Activated CD8-positive, alpha-beta memory T cell treated with anti-CD3 and anti-CD28 coated beads, Interleukin-2, amount 10 ng/mL, durations not matched to agents 7 days and 5 days (primary cell): ENCODE measurements at regions of chr17 and their contacts with region 1.

Region 1: GRCh38 chr17:57597531-57598453 is 147.3 kb downstream of the CCDC182 start:
- DNase-seq: peak; percentile 57
- ATAC-seq: no peak
- H3K4me3 Mint-ChIP-seq: no peak overlapping the region
- H3K27ac Mint-ChIP-seq: peak overlapping the region; percentile 98
- H3K4me1 Mint-ChIP-seq: peaks cover 57% of the 10 kb centered on the region
- H3K27me3 Mint-ChIP-seq: no peaks in the 10 kb centered on the region

Region 2: GRCh38 chr17:57561072-57561861 is 36.5 kb before region 1 on chr17:
- CTCF ChIA-PET with region 1: no interaction called
- DNase-seq: no peak
- ATAC-seq: no peak
- H3K4me3 Mint-ChIP-seq: no peak overlapping the region
- H3K27ac Mint-ChIP-seq: no peak overlapping the region
- H3K4me1 Mint-ChIP-seq: peaks cover 4% of the 10 kb centered on the region
- H3K27me3 Mint-ChIP-seq: no peaks in the 10 kb centered on the region

Region 3: DNA sequence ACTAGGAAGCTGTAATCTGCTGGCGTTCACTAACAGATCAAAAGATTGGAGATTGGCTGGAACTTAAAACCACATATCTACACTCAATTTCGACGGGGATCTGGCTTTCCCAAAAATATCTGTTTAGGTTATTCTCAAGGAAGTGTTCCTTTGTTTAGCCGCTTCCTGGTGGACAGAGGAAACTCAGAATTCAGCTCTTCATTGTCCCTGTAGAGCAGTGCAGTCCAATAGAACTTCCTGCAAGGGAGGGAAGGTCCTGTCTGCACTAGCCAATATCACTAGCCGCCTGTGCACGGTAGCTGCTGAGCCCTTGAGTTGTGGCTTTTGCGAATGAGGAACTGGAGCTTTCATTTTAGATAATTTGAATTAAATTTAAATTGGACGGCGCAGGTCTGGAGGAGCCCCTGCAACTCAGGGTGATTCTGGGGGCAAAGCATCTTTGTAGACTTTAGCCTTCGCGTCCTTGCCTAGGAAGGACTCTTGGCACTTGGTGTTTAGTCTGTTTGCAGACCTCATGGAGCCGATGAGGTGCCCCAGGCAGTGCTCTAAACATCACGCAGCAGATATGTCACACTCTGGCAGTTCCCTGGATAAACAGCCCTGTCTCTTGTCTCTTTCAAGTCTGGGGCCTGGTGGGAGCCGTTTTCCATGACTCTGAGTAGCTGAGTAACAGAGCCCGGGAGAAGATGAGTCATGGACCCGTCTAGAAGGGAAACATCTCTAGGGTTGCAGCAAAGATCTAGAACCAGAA is 25.1 kb after region 1 on chr17:
- CTCF ChIA-PET with region 1: interaction called, 12 read pairs
- DNase-seq: no peak
- ATAC-seq: no peak
- H3K4me3 Mint-ChIP-seq: no peak overlapping the region
- H3K27ac Mint-ChIP-seq: no peak overlapping the region
- H3K4me1 Mint-ChIP-seq: peaks cover 19% of the 10 kb centered on the region
- H3K27me3 Mint-ChIP-seq: no peaks in the 10 kb centered on the region

Region 4: DNA sequence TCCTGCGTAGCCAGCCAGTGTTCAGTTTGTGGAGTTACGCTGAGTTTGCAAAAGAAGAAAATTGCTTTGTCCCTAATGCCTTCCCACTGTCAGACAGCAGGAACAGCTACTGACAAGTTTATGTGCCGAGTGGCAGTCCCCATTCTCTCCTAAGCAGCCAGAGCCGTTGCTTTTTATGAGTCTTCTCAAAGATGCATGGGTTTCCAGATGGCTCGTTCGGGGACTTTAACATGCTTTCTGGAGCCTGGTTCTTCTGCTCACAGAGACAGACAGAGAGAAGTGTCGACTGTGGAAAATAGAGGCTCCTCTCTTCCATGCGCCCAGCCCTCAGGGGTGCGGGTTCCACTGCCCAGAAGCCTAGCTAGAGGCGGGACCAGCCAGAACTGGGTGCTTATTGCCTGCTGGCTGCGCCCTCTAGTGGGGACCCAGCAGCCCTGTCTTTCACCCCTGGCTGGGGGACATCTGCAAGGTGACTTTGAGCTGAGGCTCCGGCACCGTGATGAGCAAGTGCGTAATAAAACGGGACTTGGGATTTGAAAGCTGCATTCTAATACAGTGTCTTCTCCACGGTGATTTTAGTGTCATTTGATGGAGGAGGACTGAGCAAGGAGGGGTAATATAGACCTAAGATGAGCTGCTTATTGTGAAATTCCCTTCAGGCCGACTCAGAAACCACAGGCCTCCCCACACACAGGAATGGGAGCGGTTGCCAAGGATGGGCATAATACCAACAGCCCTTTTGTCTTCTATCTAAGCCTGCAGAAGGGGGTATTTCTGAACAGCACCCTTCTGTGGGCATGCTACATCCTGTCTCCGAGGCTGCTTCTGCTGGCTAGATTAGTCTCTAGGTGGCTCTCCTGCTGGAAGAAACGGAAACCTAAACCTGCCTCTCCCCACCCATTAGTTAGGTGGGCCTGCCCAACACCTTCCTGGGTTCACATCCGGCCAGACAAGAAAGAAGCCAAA is 74.2 kb after region 1 on chr17:
- CTCF ChIA-PET with region 1: interaction called, 108 read pairs
- DNase-seq: peak; percentile 86
- ATAC-seq: peak; percentile 93
- H3K4me3 Mint-ChIP-seq: peak overlapping the region; percentile 50
- H3K27ac Mint-ChIP-seq: peak overlapping the region; percentile 96
- H3K4me1 Mint-ChIP-seq: peaks cover 47% of the 10 kb centered on the region
- H3K27me3 Mint-ChIP-seq: no peaks in the 10 kb centered on the region

Region 5: GRCh38 chr17:57739402-57740392 is 141.9 kb after region 1 on chr17:
- CTCF ChIA-PET with region 1: interaction called, 45 read pairs
- DNase-seq: no peak
- ATAC-seq: peak; percentile 89
- H3K4me3 Mint-ChIP-seq: no peak overlapping the region
- H3K27ac Mint-ChIP-seq: no peak overlapping the region
- H3K4me1 Mint-ChIP-seq: peaks cover 11% of the 10 kb centered on the region
- H3K27me3 Mint-ChIP-seq: peaks cover 25% of the 10 kb centered on the region

Region 6: GRCh38 chr17:57747221-57748017 is 149.6 kb after region 1 on chr17:
- CTCF ChIA-PET with region 1: interaction called, 45 read pairs
- DNase-seq: peak; percentile 57
- ATAC-seq: peak; percentile 74
- H3K4me3 Mint-ChIP-seq: no peak overlapping the region
- H3K27ac Mint-ChIP-seq: no peak overlapping the region
- H3K4me1 Mint-ChIP-seq: peaks cover 13% of the 10 kb centered on the region
- H3K27me3 Mint-ChIP-seq: peaks cover 11% of the 10 kb centered on the region